Activated T-helper 2 cell treated with anti-CD3 and anti-CD28 coated beads, Interferon-gamma antibody, Interleukin-2, Interleukin-4, amounts not matched to agents 10 μg/mL and 5 μg/mL and 100 μg/mL, durations not matched to agents 14 hours and 24 hours and 36 hours (primary cell): ENCODE measurements at regions of chr5 and their contacts with region 1.

Region 1: GRCh38 chr5:131252824-131253171 is 11.1 kb upstream of the CDC42SE2 start:
- DNase-seq: peak; percentile 79
- H3K4me3 Mint-ChIP-seq: peak overlapping the region; percentile 90
- H3K27ac Mint-ChIP-seq: peak overlapping the region; percentile 99
- H3K4me1 Mint-ChIP-seq: peaks cover 59% of the 10 kb centered on the region
- H3K27me3 Mint-ChIP-seq: no peaks in the 10 kb centered on the region

Region 2: GRCh38 chr5:131165119-131165727 is 87.6 kb before region 1 on chr5 and contains the start of gene HINT1:
- intact Hi-C with region 1: loop called (anchors 1 kb)
- DNase-seq: peak; percentile 91
- H3K4me3 Mint-ChIP-seq: peak within 1 kb of the TSS; percentile 96
- H3K27ac Mint-ChIP-seq: peak within 1 kb of the TSS; percentile 99
- H3K4me1 Mint-ChIP-seq: peaks cover 49% of the 10 kb centered on the region
- H3K27me3 Mint-ChIP-seq: no peaks in the 10 kb centered on the region
- total RNA-seq, gene HINT1: 279 and 282 TPM in 2 replicates

Region 3: DNA sequence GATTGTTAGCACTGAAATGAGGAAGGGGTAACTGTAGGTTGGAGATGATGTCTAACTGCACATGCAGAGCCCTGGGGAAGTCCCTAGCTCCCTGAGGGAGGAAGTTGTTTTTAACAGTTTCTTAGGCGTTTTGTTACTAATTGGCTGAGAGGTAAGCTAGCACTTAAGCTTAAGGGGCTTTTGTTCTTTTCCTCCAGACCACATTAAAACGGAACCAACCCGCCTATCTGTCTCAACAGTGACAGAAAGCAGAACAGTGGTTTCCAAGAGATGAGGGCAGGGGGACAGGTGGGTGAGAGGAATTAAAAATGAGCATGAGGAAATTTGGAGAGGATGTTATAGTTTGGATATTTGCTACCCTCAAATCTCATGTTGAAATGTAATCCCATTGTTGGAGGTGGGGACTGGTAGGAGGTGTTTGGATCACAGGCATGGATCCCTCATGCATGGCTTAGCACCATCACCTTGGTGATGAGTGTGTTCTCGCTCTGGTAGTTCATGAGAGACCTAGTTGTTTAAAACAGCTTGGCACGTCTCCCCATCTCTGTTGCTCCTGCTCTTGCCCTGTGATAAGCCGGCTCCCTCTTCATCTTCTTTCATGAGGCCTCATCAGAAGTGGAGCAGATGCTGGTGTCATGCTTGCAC is 43.2 kb before region 1 on chr5:
- intact Hi-C with region 1: loop called (anchors 1 kb)
- DNase-seq: peak; percentile 40
- H3K4me3 Mint-ChIP-seq: peak overlapping the region; percentile 80
- H3K27ac Mint-ChIP-seq: peak overlapping the region; percentile 96
- H3K4me1 Mint-ChIP-seq: peaks cover 53% of the 10 kb centered on the region
- H3K27me3 Mint-ChIP-seq: no peaks in the 10 kb centered on the region

Region 4: GRCh38 chr5:131242728-131243255 is 10.0 kb before region 1 on chr5:
- intact Hi-C with region 1: loop called (anchors 1 kb)
- DNase-seq: no peak
- H3K4me3 Mint-ChIP-seq: no peak overlapping the region
- H3K27ac Mint-ChIP-seq: no peak overlapping the region
- H3K4me1 Mint-ChIP-seq: peaks cover 9% of the 10 kb centered on the region
- H3K27me3 Mint-ChIP-seq: no peaks in the 10 kb centered on the region

Region 5: DNA sequence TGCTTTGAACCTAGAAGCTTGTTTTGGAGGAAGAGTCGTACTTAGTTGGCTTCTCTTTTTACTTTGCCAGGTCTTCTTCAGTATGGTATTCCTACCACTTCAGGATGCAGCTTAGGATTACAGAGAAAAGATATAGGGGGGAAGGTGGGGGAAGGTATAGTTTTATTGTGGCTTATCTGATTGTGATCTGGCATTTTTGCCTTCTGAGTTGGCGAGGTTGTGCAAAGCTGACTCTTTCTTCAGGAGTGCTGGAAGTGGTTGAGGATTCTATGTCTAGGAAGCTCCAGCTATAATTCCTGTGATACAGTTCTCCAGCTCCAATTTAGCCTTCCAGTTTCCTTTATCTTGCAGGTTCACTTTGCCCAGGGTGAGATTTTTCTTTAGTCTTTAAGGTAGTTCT is 18.0 kb after region 1 on chr5:
- intact Hi-C with region 1: loop called (anchors 1 kb)
- DNase-seq: no peak
- H3K4me3 Mint-ChIP-seq: peak overlapping the region; percentile 78
- H3K27ac Mint-ChIP-seq: peak overlapping the region; percentile 74
- H3K4me1 Mint-ChIP-seq: peaks cover 49% of the 10 kb centered on the region
- H3K27me3 Mint-ChIP-seq: no peaks in the 10 kb centered on the region

Region 6: DNA sequence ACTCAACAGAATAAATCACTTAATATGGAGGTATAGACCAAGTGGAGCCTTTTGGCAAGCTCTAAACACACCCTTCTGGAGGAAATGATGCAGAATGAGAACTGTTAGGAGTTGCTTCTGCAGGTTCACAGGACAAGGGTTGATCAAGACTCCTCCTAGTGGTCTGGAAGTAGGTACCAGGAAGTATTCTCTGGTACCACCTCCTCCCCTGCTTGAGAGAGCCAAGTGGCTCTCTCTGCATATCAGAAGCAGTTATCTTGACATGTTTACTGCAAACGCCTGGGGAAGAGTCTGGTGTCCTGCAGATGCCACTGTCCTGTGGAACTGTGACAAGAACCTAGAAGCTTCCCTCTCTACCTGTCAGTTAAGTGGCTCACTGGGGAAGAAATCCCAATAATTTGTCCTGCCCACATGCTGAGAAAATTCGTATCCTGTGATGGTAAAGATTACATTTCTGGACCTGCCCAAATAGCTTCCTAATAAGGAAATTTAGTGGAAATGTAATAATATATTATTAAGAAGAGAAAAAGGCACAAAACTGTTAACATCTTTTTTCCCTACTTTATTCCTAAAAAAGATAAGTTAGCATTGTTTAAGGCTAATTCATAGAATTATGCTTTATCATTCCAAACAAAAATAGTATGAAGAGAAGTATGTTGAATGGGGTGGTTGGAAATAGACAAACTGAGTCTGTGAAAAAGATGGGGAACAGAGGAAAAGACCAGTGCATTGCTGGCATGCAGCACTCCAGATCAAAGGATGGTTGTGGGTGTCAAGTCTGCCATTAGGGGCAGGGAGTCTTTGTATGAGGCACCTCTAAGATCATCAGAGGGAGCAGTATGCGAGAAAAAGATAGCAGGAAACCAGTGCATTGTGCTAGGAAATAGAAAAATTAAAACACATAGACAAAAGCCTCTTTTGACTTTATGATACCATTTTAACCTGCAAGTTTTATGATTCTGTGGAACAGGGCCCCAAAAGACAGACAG is 129.9 kb after region 1 on chr5:
- intact Hi-C with region 1: loop called (anchors 1 kb)
- DNase-seq: peak; percentile 56
- H3K4me3 Mint-ChIP-seq: peak overlapping the region; percentile 40
- H3K27ac Mint-ChIP-seq: peak overlapping the region; percentile 97
- H3K4me1 Mint-ChIP-seq: peaks cover 80% of the 10 kb centered on the region
- H3K27me3 Mint-ChIP-seq: no peaks in the 10 kb centered on the region

Region 7: DNA sequence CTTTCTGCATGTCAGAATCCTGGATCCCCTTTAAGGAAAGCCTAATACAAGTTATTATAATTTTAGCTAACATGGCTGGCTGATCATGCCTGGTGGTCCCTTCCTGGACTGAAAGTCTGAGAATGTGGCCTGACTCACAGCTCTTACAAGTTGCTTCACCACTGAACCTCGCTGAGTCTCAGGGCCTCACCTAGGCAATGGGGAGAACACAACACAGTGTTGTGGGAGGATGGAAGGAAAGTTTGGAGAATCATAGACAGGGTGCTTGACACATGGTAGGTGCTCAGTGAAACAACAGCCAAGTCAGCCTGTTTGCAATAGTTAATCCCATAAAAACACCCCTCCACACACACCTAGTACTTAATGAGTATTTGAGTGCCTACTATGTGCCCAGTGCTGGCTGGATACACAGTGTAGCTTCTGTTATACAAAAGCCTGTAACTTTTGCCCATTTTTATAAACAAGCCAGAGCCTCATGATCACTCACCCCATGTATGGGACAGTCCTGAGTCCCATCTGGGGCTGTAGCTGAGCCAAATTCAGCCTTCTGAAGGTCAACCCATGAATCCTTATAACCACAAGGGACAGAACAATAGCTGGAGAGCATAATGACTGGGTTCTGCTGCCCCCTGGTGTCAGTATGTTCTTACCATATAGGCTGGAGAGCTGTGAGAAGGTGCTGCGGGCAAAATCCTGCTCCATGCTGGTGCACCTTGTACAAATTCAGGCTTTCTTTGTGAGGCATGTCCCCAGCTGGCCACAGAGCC is 754.8 kb after region 1 on chr5:
- intact Hi-C with region 1: loop called (anchors 10 kb)
- DNase-seq: peak; percentile 64
- H3K4me3 Mint-ChIP-seq: no peak overlapping the region
- H3K27ac Mint-ChIP-seq: no peak overlapping the region
- H3K4me1 Mint-ChIP-seq: peaks cover 34% of the 10 kb centered on the region
- H3K27me3 Mint-ChIP-seq: peaks cover 31% of the 10 kb centered on the region